Sigmoid colon (tissue), 7 donors: ENCODE measurements at regions of chr21 and their contacts with region 1.

Region 1: GRCh38 chr21:46022551-46023525 is 41.3 kb downstream of the COL6A1 start:
- DNase-seq: peak; percentile 87
- H3K4me3 ChIP-seq: peak overlapping the region in 3 of 4 donors; percentile 11 to 28 (median 25)
- H3K27ac ChIP-seq: peak overlapping the region; percentile 86 to 96 (median 90)
- H3K4me1 ChIP-seq: peaks cover 0 to 93% (median 81%) of the 10 kb centered on the region in 4 donors
- H3K27me3 ChIP-seq: no peaks in the 10 kb centered on the region
- CTCF ChIP-seq: no peak
- EP300 ChIP-seq: no peak
- POLR2A ChIP-seq: no peak

Region 2: GRCh38 chr21:45670731-45671130 is 352.1 kb before region 1 on chr21:
- intact Hi-C with region 1: no loop called
- DNase-seq: no peak
- H3K4me3 ChIP-seq: no peak overlapping the region
- H3K27ac ChIP-seq: no peak overlapping the region
- H3K4me1 ChIP-seq: no peaks in the 10 kb centered on the region
- H3K27me3 ChIP-seq: no peaks in the 10 kb centered on the region
- CTCF ChIP-seq: no peak
- EP300 ChIP-seq: no peak
- POLR2A ChIP-seq: no peak

Region 3: GRCh38 chr21:45981151-45982089 is 41.4 kb before region 1 on chr21 and contains the start of gene COL6A1:
- intact Hi-C with region 1: loop called (anchors 2 kb)
- DNase-seq: peak; percentile 96
- H3K4me3 ChIP-seq: peak within 1 kb of the TSS; percentile 79 to 99 (median 94)
- H3K27ac ChIP-seq: peak within 1 kb of the TSS; percentile 95 to 98 (median 98)
- H3K4me1 ChIP-seq: peaks cover 0 to 70% (median 63%) of the 10 kb centered on the region in 4 donors
- H3K27me3 ChIP-seq: no peaks in the 10 kb centered on the region
- CTCF ChIP-seq: no peak
- EP300 ChIP-seq: peak in 1 of 4 donors; percentile 4
- POLR2A ChIP-seq: peak; percentile 73 to 85
- total RNA-seq, gene COL6A1: 622 to 1,755 (median 1,184) TPM

Region 4: DNA sequence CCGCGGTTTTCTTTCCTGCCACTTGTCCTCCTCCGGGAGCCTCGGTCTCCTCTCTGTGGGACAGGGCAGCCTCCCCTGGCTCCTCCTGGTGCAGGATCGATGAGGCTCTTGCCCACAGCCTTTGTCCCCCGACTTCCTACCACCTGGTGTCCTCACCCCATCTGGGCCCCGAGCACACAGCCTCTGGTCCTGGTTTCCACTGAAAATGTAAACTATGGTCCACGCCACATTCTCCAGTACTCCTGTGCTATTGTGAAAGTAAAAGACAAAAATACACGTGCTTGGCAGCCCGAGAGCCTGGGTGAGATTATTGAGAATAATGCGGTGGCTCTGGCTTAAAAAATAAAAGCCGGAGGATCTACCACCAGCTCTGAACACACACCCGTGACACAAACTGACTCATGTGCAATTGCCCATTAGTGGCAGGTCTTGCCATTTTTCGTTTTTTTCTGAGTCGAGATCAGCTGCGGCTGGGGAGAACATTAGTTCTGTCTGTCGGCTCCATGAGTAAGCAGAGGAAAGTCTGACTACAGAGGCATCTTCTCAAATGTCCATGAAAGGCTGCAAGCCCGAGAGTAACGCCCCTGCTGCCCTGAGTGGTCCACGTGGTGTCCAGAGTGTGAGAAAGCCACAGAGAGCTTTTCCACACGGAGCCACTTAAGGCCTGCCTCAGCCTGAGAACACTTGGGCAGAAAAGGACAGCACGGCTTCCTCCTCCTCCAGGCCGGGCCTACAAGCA is 69.4 kb after region 1 on chr21:
- intact Hi-C with region 1: loop called (anchors 2 kb)
- DNase-seq: peak; percentile 97
- H3K4me3 ChIP-seq: peak overlapping the region in 3 of 4 donors; percentile 24 to 33 (median 31)
- H3K27ac ChIP-seq: peak overlapping the region; percentile 98 to 100 (median 99)
- H3K4me1 ChIP-seq: peaks cover 0 to 66% (median 54%) of the 10 kb centered on the region in 4 donors
- H3K27me3 ChIP-seq: no peaks in the 10 kb centered on the region
- CTCF ChIP-seq: no peak
- EP300 ChIP-seq: peak in 2 of 4 donors; percentile 17 to 72
- POLR2A ChIP-seq: peak; percentile 59 to 70